Activated CD8-positive, alpha-beta T cell treated with anti-CD3 and anti-CD28 coated beads, Interleukin-2, amount 10 ng/mL, durations not matched to agents 7 days and 5 days (primary cell): ENCODE measurements at regions of chr14 and their contacts with region 1.

Region 1: DNA sequence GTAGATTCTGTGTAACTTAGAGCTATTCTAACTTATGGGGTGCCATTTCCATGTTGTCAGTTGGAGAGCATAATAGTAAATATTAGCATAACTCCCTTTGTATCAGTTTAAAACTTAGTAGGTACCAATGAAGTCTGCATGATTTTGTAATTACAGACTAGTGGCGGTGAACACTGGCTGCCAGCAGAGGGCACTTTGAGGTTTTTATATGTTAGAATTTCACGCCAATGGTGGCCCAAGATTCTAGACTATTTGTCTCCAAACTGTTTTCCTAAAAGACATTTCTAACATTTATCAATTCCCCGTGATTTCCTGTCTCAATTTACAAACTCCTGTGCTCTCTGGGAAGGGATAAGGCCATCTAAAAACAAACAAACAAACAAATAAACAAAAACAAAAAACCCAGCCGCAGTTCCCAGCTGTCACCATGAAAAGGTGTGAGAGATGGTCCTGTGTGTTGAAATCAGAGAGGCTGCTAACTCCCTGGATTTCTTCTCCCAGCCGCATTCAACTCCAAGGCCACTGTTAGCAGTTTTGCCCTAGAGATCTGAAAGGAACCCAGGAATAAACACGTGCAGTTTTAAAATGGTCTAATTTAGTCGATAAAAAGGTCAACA is 57.6 kb downstream of the BRMS1L start:
- DNase-seq: peak; percentile 57
- ATAC-seq: peak; percentile 49
- H3K4me3 Mint-ChIP-seq: no peak overlapping the region
- H3K27ac Mint-ChIP-seq: no peak overlapping the region
- H3K4me1 Mint-ChIP-seq: peaks cover 9% of the 10 kb centered on the region
- H3K27me3 Mint-ChIP-seq: no peaks in the 10 kb centered on the region

Region 2: DNA sequence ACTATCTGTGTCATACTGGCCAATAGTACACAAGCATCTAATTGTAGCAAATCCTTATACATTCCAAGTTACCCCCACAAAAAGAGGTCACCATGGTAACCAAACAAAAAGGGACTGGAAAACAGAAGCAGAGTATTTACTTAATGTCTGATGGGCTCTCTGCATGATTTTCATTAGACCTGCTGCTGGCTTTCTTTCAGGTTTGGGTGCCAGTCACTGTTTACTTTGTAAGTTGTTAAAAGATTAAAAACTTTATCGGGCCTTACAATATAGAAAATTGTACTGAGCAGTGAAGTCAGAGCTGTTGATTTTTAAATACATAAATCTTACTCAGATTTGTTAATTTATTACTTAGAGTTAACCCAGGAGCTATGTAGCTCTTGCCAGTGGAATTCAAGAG is 66.2 kb after region 1 on chr14:
- CTCF ChIA-PET with region 1: interaction called, 44 read pairs
- POLR2A ChIA-PET with region 1: no interaction called
- DNase-seq: no peak
- ATAC-seq: no peak
- H3K4me3 Mint-ChIP-seq: no peak overlapping the region
- H3K27ac Mint-ChIP-seq: no peak overlapping the region
- H3K4me1 Mint-ChIP-seq: peaks cover 7% of the 10 kb centered on the region
- H3K27me3 Mint-ChIP-seq: peaks cover 5% of the 10 kb centered on the region

Region 3: DNA sequence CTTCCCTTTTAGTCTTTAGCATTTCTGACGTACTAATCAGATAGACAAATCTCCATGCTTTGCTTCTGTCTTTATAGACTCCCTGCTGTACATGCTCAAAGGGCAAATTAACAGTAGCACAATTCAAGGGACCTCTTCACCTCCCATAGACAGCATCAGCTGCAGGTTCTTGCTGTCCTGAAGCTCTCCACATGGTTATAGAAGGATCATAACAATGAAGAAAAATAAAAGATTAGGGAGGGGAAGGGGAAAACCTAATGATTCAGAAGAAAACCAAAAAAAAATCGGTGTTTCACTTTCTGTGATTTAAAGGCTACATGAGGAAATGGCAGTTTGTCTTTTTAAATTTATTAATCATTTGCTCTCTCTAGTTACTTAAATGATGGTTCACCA is 137.2 kb after region 1 on chr14:
- CTCF ChIA-PET with region 1: interaction called, 13 read pairs
- POLR2A ChIA-PET with region 1: no interaction called
- DNase-seq: no peak
- ATAC-seq: no peak
- H3K4me3 Mint-ChIP-seq: no peak overlapping the region
- H3K27ac Mint-ChIP-seq: no peak overlapping the region
- H3K4me1 Mint-ChIP-seq: peaks cover 4% of the 10 kb centered on the region
- H3K27me3 Mint-ChIP-seq: peaks cover 9% of the 10 kb centered on the region

Region 4: GRCh38 chr14:36070031-36070719 is 186.4 kb after region 1 on chr14:
- CTCF ChIA-PET with region 1: interaction called, 184 read pairs
- POLR2A ChIA-PET with region 1: no interaction called
- DNase-seq: peak; percentile 55
- ATAC-seq: peak; percentile 58
- H3K4me3 Mint-ChIP-seq: no peak overlapping the region
- H3K27ac Mint-ChIP-seq: no peak overlapping the region
- H3K4me1 Mint-ChIP-seq: peaks cover 5% of the 10 kb centered on the region
- H3K27me3 Mint-ChIP-seq: peaks cover 16% of the 10 kb centered on the region